ENCODE measurements at regions of chr3 and their contacts with region 1.

Region 1: GRCh38 chr3:184777336-184778004 is 34.5 kb upstream of the VPS8 start:
- DNase-seq: peak; percentile 68 to 99 (median 92)

Region 2: DNA sequence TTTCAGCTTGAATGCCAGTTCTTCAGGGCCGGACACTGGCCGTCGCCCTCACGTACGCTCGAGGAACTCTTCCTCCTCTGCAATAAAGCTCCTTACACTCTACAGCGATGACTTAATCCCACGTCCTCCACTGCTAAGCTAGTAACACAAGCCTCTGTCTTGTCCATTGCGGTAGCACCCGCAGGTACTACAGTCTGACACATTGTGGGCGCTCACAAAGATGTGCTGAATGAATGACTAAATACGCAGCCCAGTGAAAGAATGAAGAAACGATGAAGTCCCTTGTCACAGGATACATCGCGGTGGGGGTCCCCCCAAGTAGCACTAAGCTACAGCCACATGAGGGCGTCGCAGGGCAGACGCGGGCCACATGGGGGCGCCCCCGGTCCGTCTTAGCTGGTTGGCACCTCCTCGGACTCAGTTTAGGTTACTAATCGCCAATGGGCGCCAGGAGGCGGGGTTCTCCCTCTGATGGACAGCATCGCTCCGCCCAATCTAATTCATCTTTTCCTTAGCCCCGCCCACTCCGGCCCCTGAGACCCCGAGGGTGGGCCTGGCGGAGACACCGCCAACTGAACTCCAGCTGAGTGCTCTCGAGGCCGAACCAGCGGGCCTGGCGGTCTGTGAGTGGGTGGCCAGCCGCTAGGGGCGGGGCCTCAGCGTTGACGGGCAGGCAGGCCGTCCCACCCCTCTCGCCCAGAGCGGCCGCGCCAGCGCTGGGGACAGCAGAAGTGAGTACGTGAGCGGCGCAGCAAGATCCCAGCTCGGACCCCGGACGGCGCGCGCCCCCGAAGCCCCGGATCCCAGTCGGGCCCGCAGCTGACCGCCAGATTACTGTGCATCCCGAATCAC is 216.2 kb before region 1 on chr3 and contains the start of gene EPHB3:
- intact Hi-C with region 1: loop called (anchors 1 kb)
- DNase-seq: peak; percentile 96 to 100 (median 99)

Region 3: DNA sequence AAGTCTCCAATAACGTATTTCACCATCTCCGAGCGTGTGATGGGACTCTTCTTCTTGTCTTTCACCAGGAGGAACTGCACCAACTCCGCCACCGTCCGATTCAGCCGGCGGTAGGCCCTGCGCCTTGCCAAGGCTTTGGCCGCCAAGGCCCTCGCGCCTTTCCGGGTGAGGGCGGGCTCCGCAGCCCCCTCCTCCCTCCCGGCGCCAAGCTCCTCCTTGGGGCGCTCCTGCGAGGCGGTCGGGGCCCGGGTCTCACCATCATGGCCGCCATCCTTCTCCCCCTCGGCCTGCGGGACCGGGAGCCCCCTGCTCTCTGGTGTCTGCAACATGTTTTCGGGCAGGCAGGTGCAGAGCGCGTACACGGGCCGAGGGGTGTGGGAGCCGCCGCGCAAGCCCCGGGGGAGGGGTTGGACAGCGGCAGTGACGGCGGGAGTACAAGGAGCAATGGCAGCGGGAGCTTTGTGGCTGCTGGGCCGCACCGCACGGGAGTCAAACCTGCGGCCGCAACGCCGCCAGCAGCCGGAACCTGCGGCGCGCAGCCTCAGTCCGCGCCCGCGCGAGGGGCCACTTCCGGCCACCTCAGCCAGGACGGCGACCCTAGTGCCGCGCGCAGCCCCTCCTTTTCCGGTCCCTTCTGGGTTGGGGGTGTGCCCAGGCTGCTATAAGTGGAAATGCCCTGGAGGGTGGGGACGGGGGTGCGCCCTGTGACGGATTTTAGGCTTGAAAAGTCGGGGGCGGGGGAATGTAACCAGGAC is 65.8 kb before region 1 on chr3 and contains the start of gene MAGEF1:
- intact Hi-C with region 1: loop called (anchors 10 kb)
- DNase-seq: peak; percentile 65 to 91 (median 80)

Region 4: GRCh38 chr3:184727357-184728009 is 50.0 kb before region 1 on chr3:
- intact Hi-C with region 1: no loop called
- DNase-seq: peak in 37 of 42 donors; percentile 25 to 86 (median 61)